CD8-positive, alpha-beta memory T cell (primary cell): ENCODE measurements at regions of chr3 and their contacts with region 1.

Region 1: GRCh38 chr3:45938864-45939263 is 4.4 kb upstream of the CXCR6 start:
- DNase-seq: peak; percentile 74 to 87 (median 76)
- H3K4me3 ChIP-seq: no peak overlapping the region
- H3K4me3 Mint-ChIP-seq: peak overlapping the region in 1 of 7 donors; percentile 42
- H3K27ac ChIP-seq: no peak overlapping the region
- H3K27ac Mint-ChIP-seq: peak overlapping the region in 5 of 8 donors; percentile 13 to 79 (median 62)
- H3K4me1 ChIP-seq: peaks cover 30% of the 10 kb centered on the region
- H3K4me1 Mint-ChIP-seq: peaks cover 47 to 64% (median 55%) of the 10 kb centered on the region in 3 donors
- H3K27me3 ChIP-seq: no peaks in the 10 kb centered on the region
- H3K27me3 Mint-ChIP-seq: no peaks in the 10 kb centered on the region

Region 2: GRCh38 chr3:45760878-45761711 is 177.8 kb before region 1 on chr3:
- CTCF ChIA-PET with region 1: interaction called, 12 read pairs
- POLR2A ChIA-PET with region 1: no interaction called
- DNase-seq: peak; percentile 20 to 62 (median 27)
- H3K4me3 ChIP-seq: no peak overlapping the region
- H3K4me3 Mint-ChIP-seq: no peak overlapping the region
- H3K27ac ChIP-seq: no peak overlapping the region
- H3K27ac Mint-ChIP-seq: peak overlapping the region in 1 of 8 donors; percentile 17
- H3K4me1 ChIP-seq: no peaks in the 10 kb centered on the region
- H3K4me1 Mint-ChIP-seq: peaks cover 2 to 5% (median 4%) of the 10 kb centered on the region in 3 donors
- H3K27me3 ChIP-seq: no peaks in the 10 kb centered on the region
- H3K27me3 Mint-ChIP-seq: peaks cover 4 to 6% of the 10 kb centered on the region in 2 donors

Region 3: GRCh38 chr3:45958321-45958791 is 19.5 kb after region 1 on chr3:
- CTCF ChIA-PET with region 1: interaction called, 10 read pairs
- POLR2A ChIA-PET with region 1: no interaction called
- DNase-seq: peak in 1 of 5 donors; percentile 51
- H3K4me3 ChIP-seq: no peak overlapping the region
- H3K4me3 Mint-ChIP-seq: peak overlapping the region; percentile 3 to 84 (median 56)
- H3K27ac ChIP-seq: no peak overlapping the region
- H3K27ac Mint-ChIP-seq: peak overlapping the region; percentile 81 to 95 (median 92)
- H3K4me1 ChIP-seq: peaks cover 36% of the 10 kb centered on the region
- H3K4me1 Mint-ChIP-seq: peaks cover 76 to 90% (median 78%) of the 10 kb centered on the region in 3 donors
- H3K27me3 ChIP-seq: no peaks in the 10 kb centered on the region
- H3K27me3 Mint-ChIP-seq: no peaks in the 10 kb centered on the region

Region 4: GRCh38 chr3:45968706-45969105 is 29.8 kb after region 1 on chr3:
- CTCF ChIA-PET with region 1: interaction called, 22 read pairs
- POLR2A ChIA-PET with region 1: interaction called, 7 read pairs
- DNase-seq: no peak
- H3K4me3 ChIP-seq: no peak overlapping the region
- H3K4me3 Mint-ChIP-seq: peak overlapping the region in 4 of 7 donors; percentile 44 to 83 (median 53)
- H3K27ac ChIP-seq: no peak overlapping the region
- H3K27ac Mint-ChIP-seq: peak overlapping the region in 7 of 8 donors; percentile 60 to 94 (median 80)
- H3K4me1 ChIP-seq: peaks cover 82% of the 10 kb centered on the region
- H3K4me1 Mint-ChIP-seq: peaks cover 89 to 96% (median 94%) of the 10 kb centered on the region in 3 donors
- H3K27me3 ChIP-seq: no peaks in the 10 kb centered on the region
- H3K27me3 Mint-ChIP-seq: no peaks in the 10 kb centered on the region

Region 5: GRCh38 chr3:46065294-46065721 is 126.4 kb after region 1 on chr3:
- CTCF ChIA-PET with region 1: interaction called, 15 read pairs
- POLR2A ChIA-PET with region 1: interaction called, 14 read pairs
- DNase-seq: peak; percentile 62 to 94 (median 84)
- H3K4me3 ChIP-seq: peak overlapping the region; percentile 13
- H3K4me3 Mint-ChIP-seq: peak overlapping the region; percentile 36 to 84 (median 76)
- H3K27ac ChIP-seq: no peak overlapping the region
- H3K27ac Mint-ChIP-seq: peak overlapping the region; percentile 77 to 97 (median 96)
- H3K4me1 ChIP-seq: peaks cover 66% of the 10 kb centered on the region
- H3K4me1 Mint-ChIP-seq: peaks cover 72 to 79% (median 79%) of the 10 kb centered on the region in 3 donors
- H3K27me3 ChIP-seq: no peaks in the 10 kb centered on the region
- H3K27me3 Mint-ChIP-seq: no peaks in the 10 kb centered on the region

Region 6: DNA sequence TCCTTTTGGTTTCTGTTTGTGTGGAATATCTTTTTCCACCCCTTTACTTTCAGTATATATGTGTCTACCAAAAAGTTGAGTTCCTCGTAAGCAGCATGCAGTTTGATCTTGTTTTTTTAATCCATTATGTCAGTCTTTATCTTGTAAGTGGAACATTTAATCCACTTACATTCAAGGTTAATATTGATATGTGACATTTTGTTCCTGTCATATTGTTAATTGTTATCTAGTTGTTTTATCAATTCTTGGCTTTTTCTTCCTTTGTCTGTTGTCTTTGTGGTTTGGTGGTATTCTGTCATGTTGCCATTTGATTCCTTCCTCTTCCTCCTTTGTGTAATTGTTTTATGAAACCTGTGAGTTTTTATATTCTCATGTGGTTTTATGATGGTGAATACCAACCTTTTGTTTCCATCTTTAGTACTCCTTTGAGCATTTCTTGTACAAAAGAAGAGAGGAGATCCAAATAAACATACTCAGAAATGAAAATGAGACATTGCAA is 131.8 kb after region 1 on chr3:
- CTCF ChIA-PET with region 1: interaction called, 295 read pairs
- POLR2A ChIA-PET with region 1: interaction called, 14 read pairs
- DNase-seq: peak in 2 of 5 donors; percentile 50 to 55
- H3K4me3 ChIP-seq: no peak overlapping the region
- H3K4me3 Mint-ChIP-seq: peak overlapping the region; percentile 6 to 47 (median 21)
- H3K27ac ChIP-seq: no peak overlapping the region
- H3K27ac Mint-ChIP-seq: peak overlapping the region in 7 of 8 donors; percentile 3 to 97 (median 64)
- H3K4me1 ChIP-seq: peaks cover 60% of the 10 kb centered on the region
- H3K4me1 Mint-ChIP-seq: peaks cover 70 to 93% (median 72%) of the 10 kb centered on the region in 3 donors
- H3K27me3 ChIP-seq: no peaks in the 10 kb centered on the region
- H3K27me3 Mint-ChIP-seq: no peaks in the 10 kb centered on the region

Region 7: GRCh38 chr3:46107682-46108081 is 168.8 kb after region 1 on chr3:
- CTCF ChIA-PET with region 1: no interaction called
- POLR2A ChIA-PET with region 1: no interaction called
- DNase-seq: peak in 4 of 5 donors; percentile 30 to 70 (median 58)
- H3K4me3 ChIP-seq: no peak overlapping the region
- H3K4me3 Mint-ChIP-seq: peak overlapping the region; percentile 27 to 85 (median 54)
- H3K27ac ChIP-seq: no peak overlapping the region
- H3K27ac Mint-ChIP-seq: peak overlapping the region; percentile 65 to 99 (median 97)
- H3K4me1 ChIP-seq: peaks cover 54% of the 10 kb centered on the region
- H3K4me1 Mint-ChIP-seq: peaks cover 82 to 87% (median 82%) of the 10 kb centered on the region in 3 donors
- H3K27me3 ChIP-seq: no peaks in the 10 kb centered on the region
- H3K27me3 Mint-ChIP-seq: no peaks in the 10 kb centered on the region

Region 8: DNA sequence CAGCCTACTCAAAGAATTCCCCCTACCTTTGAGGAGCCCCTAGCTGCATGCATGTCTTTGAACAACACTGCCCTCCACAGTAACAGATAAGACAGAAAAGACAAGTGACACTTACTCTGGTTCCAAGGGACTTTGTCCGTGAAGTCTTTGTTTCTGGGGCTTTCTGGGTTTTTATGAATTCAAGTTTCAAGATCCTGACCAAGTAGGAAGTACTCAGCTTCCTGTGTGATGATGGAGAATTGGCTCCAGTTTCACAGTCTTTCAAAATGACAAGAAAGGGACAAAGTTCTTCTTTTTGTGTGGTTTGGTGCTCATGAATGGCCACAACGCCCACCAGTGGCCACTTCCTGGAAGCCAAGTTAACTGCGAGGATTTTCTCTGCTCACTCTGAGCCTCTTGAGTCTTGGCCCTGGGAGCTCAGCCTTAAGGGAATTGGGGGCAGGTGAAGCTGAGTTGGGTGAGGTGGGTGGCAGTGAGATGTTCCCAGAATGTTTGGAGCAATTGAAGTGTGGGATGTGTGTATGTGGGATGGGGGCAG is 269.4 kb after region 1 on chr3 and contains the start of gene CCR1:
- CTCF ChIA-PET with region 1: interaction called, 10 read pairs
- POLR2A ChIA-PET with region 1: no interaction called
- DNase-seq: peak in 4 of 5 donors; percentile 6 to 61 (median 36)
- H3K4me3 ChIP-seq: no peak within 1 kb of the TSS
- H3K4me3 Mint-ChIP-seq: peak within 1 kb of the TSS; percentile 55 to 94 (median 88)
- H3K27ac ChIP-seq: no peak within 1 kb of the TSS
- H3K27ac Mint-ChIP-seq: peak within 1 kb of the TSS; percentile 75 to 97 (median 87)
- H3K4me1 ChIP-seq: peaks cover 30% of the 10 kb centered on the region
- H3K4me1 Mint-ChIP-seq: peaks cover 42 to 62% (median 54%) of the 10 kb centered on the region in 3 donors
- H3K27me3 ChIP-seq: no peaks in the 10 kb centered on the region
- H3K27me3 Mint-ChIP-seq: no peaks in the 10 kb centered on the region
- total RNA-seq, gene CCR1: 1.5 to 1.8 TPM